Activated naive CD8-positive, alpha-beta T cell treated with anti-CD3 and anti-CD28 coated beads, Interleukin-2, amount 10 ng/mL, durations not matched to agents 7 days and 5 days (primary cell): ENCODE measurements at regions of chr7 and their contacts with region 1.

Region 1: GRCh38 chr7:66505531-66506451 is 122.9 kb upstream of the KCTD7 start:
- DNase-seq: peak; percentile 81
- ATAC-seq: peak; percentile 69
- H3K4me3 Mint-ChIP-seq: peak overlapping the region; percentile 73
- H3K27ac Mint-ChIP-seq: no peak overlapping the region
- H3K4me1 Mint-ChIP-seq: peaks cover 9% of the 10 kb centered on the region
- H3K27me3 Mint-ChIP-seq: peaks cover 36% of the 10 kb centered on the region

Region 2: DNA sequence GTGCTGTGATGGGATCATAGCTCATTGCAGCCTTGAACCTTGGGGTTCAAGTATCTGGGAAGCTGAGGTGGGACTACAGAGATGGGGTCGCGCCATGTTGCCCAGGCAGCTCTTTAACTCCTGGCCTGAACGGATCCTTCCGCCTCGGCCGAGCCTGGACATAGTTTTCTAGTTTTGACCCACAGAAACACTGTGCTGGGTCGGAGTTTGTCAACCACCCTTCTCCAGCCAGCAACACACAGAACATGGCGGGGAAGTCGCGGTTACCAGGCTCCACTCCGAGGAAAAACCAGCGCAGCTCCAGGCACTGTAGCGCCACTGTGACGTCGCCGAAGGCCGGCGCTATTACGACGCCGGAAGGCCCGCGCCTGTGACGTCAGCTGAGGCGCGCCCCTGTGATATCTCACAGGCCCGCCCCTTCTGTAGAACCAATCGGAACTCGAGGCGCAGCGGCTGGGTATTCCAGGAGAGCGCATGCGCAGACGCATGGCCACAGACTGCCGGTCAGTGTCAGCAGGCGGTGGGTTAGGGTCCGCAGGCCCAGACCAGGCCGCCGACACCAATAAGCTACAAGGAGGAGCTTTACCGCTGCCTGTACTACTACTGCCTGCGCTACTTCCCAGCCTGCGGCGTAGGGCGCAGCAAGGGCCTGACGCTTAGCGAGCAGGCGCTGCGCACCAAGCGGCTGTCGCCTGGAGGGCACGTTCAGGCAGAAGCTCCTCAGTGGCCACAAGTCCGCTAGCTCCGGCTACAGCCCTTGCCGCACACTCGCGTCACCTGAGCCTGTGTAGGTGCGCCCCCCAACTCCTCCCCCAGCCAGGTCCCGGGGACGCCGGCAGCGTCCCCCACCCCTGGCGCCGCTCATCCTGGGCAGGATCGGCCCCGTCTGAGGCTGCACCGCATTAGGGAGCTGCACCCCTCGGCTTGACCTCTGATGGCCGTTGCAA is 12.3 kb before region 1 on chr7:
- POLR2A ChIA-PET with region 1: interaction called, 13 read pairs
- DNase-seq: peak; percentile 97
- ATAC-seq: peak; percentile 97
- H3K4me3 Mint-ChIP-seq: peak overlapping the region; percentile 84
- H3K27ac Mint-ChIP-seq: peak overlapping the region; percentile 96
- H3K4me1 Mint-ChIP-seq: peaks cover 4% of the 10 kb centered on the region
- H3K27me3 Mint-ChIP-seq: no peaks in the 10 kb centered on the region

Region 3: GRCh38 chr7:66517212-66517909 is 11.6 kb after region 1 on chr7:
- POLR2A ChIA-PET with region 1: no interaction called
- DNase-seq: no peak
- ATAC-seq: no peak
- H3K4me3 Mint-ChIP-seq: no peak overlapping the region
- H3K27ac Mint-ChIP-seq: no peak overlapping the region
- H3K4me1 Mint-ChIP-seq: no peaks in the 10 kb centered on the region
- H3K27me3 Mint-ChIP-seq: no peaks in the 10 kb centered on the region

Region 4: DNA sequence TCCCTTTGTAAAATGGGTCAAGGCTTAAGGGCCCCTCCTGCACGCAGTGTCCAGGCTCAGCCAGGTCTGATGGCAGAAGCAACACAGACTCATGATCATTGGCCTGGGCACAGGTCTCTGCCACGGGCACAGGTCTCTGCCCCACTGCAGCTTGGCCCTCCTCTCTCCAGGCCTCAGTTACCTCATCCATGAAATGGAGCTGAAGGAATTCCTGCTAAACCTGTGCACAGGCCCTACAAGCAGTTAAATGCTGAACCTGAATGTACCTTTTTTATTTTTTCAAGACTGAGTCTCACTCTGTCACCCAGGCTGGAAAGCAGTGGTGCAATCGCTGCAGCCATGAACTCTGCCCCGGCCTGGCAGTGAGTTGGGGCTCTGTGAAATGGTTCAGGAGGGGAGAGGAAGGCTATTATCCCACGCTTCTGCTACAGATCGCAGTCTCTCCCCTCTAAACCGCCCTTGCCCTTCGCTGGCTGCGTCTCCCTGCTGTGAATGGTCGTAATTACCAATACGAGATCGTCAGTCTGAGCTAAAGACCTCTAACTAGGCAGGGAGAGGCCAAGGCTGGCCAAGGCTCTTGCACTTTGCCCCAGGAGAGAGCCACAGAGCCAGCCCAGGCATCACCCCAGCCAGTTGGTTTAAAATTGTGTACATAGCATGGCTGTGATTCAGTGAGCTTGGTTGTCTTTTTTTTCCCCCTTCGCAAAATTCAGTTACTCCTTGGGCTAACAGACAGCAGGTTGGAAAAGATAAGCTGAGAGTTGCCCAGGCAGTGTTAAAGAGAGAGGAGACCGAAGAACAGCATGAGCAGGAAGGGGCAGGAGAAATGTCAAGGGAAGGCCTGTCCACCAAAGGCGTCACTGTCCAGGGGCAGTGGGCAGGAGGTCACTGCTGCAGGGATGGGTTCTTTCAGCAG is 29.9 kb after region 1 on chr7:
- POLR2A ChIA-PET with region 1: no interaction called
- DNase-seq: no peak
- ATAC-seq: no peak
- H3K4me3 Mint-ChIP-seq: no peak overlapping the region
- H3K27ac Mint-ChIP-seq: no peak overlapping the region
- H3K4me1 Mint-ChIP-seq: no peaks in the 10 kb centered on the region
- H3K27me3 Mint-ChIP-seq: no peaks in the 10 kb centered on the region